ENCODE measurements at regions of chr15 and their contacts with region 1.

Region 1: DNA sequence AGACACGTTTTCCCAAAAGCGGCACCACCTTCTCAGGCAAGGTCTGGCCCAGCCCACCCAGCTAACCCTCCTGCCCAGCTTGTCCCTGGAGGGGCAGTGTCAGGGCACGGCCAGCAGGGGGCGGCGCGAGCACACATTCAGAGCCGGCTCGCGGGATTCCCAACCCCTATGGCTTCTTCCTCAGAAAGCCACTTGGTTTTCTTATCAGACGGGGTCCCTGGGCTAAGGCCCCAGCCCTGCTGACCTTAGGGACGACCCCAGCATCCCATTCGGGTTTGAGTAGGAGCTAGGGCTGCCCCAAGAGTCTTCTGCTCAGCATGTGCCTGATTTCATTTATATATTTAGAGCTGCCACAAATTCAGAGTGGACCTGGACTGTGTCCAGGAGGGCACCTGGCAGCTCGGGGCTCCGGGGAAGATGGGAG is 14.5 kb downstream of the RLBP1 start:
- DNase-seq: peak; percentile 73
- H3K4me3 Mint-ChIP-seq: no peak overlapping the region
- H3K27ac Mint-ChIP-seq: no peak overlapping the region
- H3K4me1 Mint-ChIP-seq: peaks cover 37% of the 10 kb centered on the region
- H3K27me3 Mint-ChIP-seq: peaks cover 1% of the 10 kb centered on the region

Region 2: GRCh38 chr15:89171136-89172072 is 35.5 kb before region 1 on chr15:
- CTCF ChIA-PET with region 1: interaction called, 17 read pairs
- POLR2A ChIA-PET with region 1: no interaction called
- DNase-seq: peak; percentile 39
- H3K4me3 Mint-ChIP-seq: no peak overlapping the region
- H3K27ac Mint-ChIP-seq: no peak overlapping the region
- H3K4me1 Mint-ChIP-seq: peaks cover 13% of the 10 kb centered on the region
- H3K27me3 Mint-ChIP-seq: no peaks in the 10 kb centered on the region

Region 3: DNA sequence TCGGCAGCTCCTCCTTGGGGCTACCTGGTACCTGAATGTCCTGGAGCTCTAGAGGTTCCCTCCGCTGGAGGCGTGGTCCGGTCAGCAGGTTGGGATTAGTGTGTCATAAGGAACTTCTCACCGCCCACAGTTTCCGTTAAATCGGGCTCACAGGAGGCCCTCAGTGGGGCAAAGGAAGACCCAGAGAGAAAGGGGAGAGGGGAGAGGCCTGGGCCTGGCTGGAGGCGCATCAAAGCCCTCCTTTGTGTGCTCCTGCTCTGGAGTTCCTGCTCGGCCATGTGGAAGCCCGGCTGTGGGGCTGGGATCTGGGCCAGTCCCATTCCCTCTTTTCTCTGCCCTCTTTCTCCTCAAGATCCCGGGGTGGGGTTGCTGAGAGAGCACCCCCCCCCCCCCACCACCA is 14.6 kb after region 1 on chr15 and contains the start of gene RLBP1:
- CTCF ChIA-PET with region 1: interaction called, 22 read pairs
- POLR2A ChIA-PET with region 1: no interaction called
- DNase-seq: no peak
- H3K4me3 Mint-ChIP-seq: no peak within 1 kb of the TSS
- H3K27ac Mint-ChIP-seq: no peak within 1 kb of the TSS
- H3K4me1 Mint-ChIP-seq: peaks cover 2% of the 10 kb centered on the region
- H3K27me3 Mint-ChIP-seq: peaks cover 9% of the 10 kb centered on the region
- total RNA-seq, gene RLBP1: not detected

Region 4: DNA sequence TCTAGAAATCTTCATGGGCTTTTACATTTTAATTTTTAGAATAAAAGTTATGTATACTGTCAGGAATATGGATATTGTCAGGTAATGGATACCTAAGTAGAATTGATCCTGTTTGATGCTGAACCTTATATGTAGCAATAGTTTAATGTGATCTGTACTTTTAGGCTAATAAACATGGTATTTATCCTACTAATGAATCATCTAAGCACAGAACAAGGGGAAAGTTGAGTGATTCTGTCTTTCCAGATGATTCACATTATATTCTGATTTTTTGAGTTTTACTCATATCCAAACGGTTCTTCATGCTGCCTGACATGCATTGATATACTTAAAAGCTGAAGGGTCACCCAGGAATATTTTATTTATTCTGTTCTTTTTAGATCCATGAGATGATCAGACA is 71.4 kb after region 1 on chr15:
- CTCF ChIA-PET with region 1: interaction called, 13 read pairs
- POLR2A ChIA-PET with region 1: interaction called, 3 read pairs
- DNase-seq: no peak
- H3K4me3 Mint-ChIP-seq: no peak overlapping the region
- H3K27ac Mint-ChIP-seq: peak overlapping the region; percentile 9
- H3K4me1 Mint-ChIP-seq: no peaks in the 10 kb centered on the region
- H3K27me3 Mint-ChIP-seq: no peaks in the 10 kb centered on the region

Region 5: GRCh38 chr15:89307046-89307587 is 100.2 kb after region 1 on chr15:
- CTCF ChIA-PET with region 1: interaction called, 22 read pairs
- POLR2A ChIA-PET with region 1: no interaction called
- DNase-seq: no peak
- H3K4me3 Mint-ChIP-seq: no peak overlapping the region
- H3K27ac Mint-ChIP-seq: peak overlapping the region; percentile 44
- H3K4me1 Mint-ChIP-seq: peaks cover 11% of the 10 kb centered on the region
- H3K27me3 Mint-ChIP-seq: no peaks in the 10 kb centered on the region

Region 6: DNA sequence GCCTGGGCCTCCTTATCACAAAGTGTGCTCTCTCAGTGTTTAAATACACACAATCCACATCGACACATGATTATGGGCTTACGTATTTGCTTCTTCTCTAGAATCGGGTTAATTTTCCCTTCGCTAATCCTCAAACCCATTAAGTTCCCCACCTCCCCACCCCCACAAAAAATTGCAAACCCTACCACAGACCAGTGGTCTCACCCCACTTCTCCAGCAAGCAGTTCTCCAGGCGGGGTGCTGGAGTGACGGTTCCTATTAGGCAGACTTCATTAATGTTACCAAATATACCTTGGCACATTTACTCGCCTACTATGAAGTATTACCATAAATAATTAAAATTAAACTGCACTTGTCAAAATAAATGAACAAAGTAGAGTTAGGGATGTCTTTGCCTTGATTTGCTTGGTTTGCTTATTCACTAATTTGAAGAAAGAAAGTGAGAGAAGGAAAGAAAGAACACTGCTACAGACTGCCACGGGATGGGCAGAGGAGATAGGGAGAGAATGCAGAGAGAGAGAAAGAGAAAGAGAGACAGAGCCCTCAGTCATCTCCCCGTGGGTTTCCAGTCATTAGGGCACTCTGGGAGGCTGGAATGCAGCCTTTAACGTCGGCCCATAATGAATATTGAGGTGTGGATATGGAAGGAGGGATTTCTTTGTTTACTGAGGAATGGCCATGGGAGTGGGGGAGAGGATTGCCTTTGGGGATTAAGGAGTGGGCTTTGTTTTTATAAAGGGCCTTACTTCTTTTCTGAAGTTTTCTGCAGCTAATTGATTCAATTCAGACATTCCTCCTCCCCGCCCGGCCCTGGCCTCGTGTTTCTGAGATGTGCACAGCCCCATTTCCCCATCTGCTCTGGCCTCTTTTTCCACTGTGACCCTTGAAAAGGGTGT is 167.4 kb after region 1 on chr15:
- CTCF ChIA-PET with region 1: no interaction called
- POLR2A ChIA-PET with region 1: no interaction called
- DNase-seq: no peak
- H3K4me3 Mint-ChIP-seq: no peak overlapping the region
- H3K27ac Mint-ChIP-seq: no peak overlapping the region
- H3K4me1 Mint-ChIP-seq: peaks cover 7% of the 10 kb centered on the region
- H3K27me3 Mint-ChIP-seq: peaks cover 85% of the 10 kb centered on the region

Measured in activated CD4-positive, alpha-beta memory T cell treated with anti-CD3 and anti-CD28 coated beads, Interleukin-2, amount 10 ng/mL, durations not matched to agents 7 days and 5 days (primary cell).